ENCODE measurements at regions of chr13 and their contacts with region 1.

Region 1: GRCh38 chr13:32164622-32165268 is 133.2 kb downstream of the FRY start:
- DNase-seq: no peak
- H3K4me3 ChIP-seq: no peak overlapping the region
- CTCF ChIP-seq: peak; percentile 71

Region 2: DNA sequence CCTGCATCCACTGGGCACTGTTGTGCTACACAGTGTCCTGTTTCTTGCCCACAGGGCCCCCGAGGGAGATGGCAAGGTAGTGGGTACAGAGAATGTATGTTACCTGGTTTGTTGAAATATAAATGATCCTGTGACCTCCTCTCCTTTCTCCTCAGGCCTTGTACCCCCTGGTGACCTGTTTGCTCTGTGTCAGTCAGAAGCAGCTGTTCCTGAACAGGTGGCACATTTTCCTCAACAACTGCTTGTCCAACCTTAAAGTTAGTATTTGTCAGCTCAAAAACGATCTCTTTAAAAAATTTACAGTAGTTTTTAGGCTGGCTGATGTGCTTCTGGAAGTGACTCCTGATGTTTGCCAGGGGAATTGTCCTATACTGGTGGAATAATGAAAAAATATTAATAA is 28.0 kb before region 1 on chr13:
- CTCF ChIA-PET with region 1: interaction called, 13 read pairs
- POLR2A ChIA-PET with region 1: no interaction called
- DNase-seq: no peak
- H3K4me3 ChIP-seq: no peak overlapping the region
- CTCF ChIP-seq: no peak

Region 3: DNA sequence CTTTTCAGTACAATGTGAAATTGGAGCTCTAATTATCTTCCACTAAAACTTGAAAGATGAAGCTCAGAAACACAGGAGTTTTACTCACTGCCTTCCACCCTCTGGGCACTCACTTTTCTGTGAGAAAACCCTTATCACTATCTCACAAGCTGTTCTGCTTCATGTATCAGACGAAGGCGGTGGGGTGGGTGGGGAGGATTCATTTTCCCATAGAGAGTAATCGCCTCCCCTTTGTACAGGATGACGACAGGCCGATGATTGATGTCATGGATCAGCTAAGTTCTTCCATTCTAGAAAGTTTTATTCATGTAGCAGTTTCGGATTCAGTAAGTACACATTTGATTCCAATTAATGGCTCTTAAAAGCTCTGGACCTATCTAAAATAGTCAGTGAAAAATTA is 10.6 kb after region 1 on chr13:
- CTCF ChIA-PET with region 1: interaction called, 78 read pairs
- POLR2A ChIA-PET with region 1: no interaction called
- DNase-seq: no peak
- H3K4me3 ChIP-seq: no peak overlapping the region
- CTCF ChIP-seq: no peak

Region 4: GRCh38 chr13:32246468-32246867 is 81.7 kb after region 1 on chr13:
- CTCF ChIA-PET with region 1: interaction called, 36 read pairs
- POLR2A ChIA-PET with region 1: no interaction called
- DNase-seq: no peak
- H3K4me3 ChIP-seq: no peak overlapping the region
- CTCF ChIP-seq: peak; percentile 85

Region 5: GRCh38 chr13:32315238-32316027 is 150.7 kb after region 1 on chr13 and contains the starts of genes BRCA2 and ZAR1L:
- CTCF ChIA-PET with region 1: interaction called, 26 read pairs
- POLR2A ChIA-PET with region 1: no interaction called
- DNase-seq: no peak
- H3K4me3 ChIP-seq: peak within 1 kb of the TSS; percentile 92
- CTCF ChIP-seq: no peak

Region 6: DNA sequence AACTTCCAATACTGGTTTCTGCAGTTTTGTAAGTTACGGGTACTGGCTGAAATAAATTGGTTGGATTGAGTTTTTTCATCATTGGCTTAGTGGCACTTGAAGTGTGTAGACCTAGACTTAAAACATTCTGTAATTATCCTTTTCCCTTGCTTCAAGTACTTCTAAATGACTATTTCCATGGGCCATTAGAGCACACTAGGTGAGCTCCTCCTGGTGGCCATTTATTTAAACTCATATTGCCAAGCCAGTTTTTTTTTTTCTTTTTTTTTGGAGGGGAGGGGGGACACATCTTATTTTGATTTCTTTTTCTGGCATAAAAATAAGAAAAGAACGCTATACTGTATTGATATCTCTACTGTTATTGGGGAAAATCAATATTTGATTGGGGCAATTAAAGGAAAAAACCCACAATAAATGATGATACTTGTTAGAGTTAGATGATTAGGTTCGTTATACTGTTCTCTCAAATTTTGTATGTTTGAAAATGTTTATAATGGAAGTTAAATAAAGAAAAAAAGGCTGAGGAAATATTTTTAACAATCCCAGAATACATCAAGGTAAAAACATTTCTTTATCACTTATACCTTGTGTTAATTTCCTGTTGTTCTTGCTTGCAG is 504.4 kb after region 1 on chr13:
- CTCF ChIA-PET with region 1: no interaction called
- POLR2A ChIA-PET with region 1: no interaction called
- DNase-seq: no peak
- H3K4me3 ChIP-seq: no peak overlapping the region
- CTCF ChIP-seq: peak; percentile 34

Measured in AG04449 (cell line).